ENCODE measurements at regions of chr1 and their contacts with region 1.

Region 1: DNA sequence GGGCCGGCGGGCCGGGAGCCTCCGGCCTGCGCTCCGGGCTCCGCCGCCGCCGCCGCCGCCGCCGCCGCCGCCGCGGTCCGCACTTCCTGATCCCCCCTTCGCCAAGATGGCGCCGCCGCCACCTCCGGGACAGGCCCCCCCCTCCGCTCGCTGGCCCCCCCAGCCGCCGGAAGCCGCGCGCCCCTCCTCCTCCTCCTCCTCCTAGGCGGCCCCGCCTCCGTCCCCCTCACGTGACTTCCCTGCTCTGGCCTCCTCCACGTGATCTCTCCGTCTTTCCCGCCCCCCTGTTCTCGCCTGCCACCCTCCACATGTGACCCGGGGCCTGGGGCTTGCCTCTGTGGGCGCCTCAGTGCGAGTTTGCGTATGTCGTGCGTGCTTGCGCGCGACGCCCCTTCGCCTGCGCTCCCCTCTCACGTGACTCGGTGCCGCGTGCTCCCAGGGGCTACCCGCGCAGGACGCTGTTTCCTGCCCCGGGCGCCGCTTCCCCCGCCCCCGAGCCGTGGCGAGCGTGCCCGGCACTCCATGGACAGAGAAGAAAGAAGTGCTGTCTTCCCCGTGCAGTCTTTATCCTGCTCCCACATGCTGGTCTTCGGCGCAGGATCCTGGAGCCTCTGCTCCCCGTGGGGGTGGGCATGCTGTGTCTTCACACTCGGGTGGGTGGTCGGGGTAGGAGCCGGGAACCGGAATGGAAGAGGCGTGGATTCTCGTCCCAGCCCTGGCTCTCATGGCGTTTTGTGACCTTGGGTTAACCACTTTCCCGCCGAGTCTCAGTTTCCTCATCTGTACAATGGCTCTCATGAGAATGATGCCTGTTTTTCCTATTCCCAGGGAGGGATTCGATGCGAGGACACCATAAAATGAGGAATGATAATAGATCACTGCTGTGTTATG is at the start of gene UBE2Q1:
- DNase-seq: peak; percentile 100
- ATAC-seq: peak; percentile 95
- H3K4me3 Mint-ChIP-seq: peak within 1 kb of the TSS; percentile 90
- H3K27ac Mint-ChIP-seq: peak within 1 kb of the TSS; percentile 93
- H3K4me1 Mint-ChIP-seq: peaks cover 37% of the 10 kb centered on the region
- H3K27me3 Mint-ChIP-seq: no peaks in the 10 kb centered on the region
- total RNA-seq, gene UBE2Q1: 93.6 to 103 TPM

Region 2: DNA sequence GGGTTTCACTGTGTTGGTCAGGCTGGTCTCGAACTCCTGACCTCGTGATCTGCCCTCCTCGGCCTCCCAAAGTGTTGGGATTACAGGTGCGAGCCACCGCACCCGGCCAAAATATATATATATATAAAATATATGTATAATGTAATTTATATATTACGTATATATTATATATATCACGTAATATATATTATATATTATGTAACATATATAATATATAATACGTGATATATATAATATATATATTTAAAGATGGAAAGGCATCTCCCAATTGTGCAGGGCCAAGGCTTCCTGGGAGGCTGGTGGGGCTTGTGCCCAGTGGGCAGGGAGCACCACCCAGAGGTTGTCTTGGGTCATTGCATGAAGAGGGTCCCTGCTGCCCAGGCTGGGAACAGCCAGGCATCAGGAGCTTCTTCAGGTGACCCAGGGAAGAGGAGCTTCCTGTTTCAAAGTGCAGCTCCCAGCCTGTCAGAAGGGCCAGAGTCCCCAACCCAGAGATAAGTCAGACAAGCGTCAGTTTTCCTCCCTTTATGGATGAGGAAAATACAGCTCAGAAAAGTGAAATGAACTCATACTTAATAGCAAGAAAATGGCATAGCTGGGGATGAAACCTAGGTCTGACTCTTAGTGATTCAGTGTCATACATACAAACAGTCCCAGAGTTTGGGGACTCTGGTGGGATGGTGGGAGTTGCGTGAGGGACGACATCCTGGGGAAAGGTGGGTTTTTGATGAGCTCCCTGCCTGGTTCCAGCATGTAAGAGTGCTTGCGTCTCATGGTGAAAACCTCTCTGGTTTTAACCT is 12.4 kb before region 1 on chr1:
- CTCF ChIA-PET with region 1: interaction called, 21 read pairs
- POLR2A ChIA-PET with region 1: no interaction called
- DNase-seq: peak; percentile 65
- ATAC-seq: peak; percentile 80
- H3K4me3 Mint-ChIP-seq: no peak overlapping the region
- H3K27ac Mint-ChIP-seq: no peak overlapping the region
- H3K4me1 Mint-ChIP-seq: peaks cover 8% of the 10 kb centered on the region
- H3K27me3 Mint-ChIP-seq: no peaks in the 10 kb centered on the region

Region 3: DNA sequence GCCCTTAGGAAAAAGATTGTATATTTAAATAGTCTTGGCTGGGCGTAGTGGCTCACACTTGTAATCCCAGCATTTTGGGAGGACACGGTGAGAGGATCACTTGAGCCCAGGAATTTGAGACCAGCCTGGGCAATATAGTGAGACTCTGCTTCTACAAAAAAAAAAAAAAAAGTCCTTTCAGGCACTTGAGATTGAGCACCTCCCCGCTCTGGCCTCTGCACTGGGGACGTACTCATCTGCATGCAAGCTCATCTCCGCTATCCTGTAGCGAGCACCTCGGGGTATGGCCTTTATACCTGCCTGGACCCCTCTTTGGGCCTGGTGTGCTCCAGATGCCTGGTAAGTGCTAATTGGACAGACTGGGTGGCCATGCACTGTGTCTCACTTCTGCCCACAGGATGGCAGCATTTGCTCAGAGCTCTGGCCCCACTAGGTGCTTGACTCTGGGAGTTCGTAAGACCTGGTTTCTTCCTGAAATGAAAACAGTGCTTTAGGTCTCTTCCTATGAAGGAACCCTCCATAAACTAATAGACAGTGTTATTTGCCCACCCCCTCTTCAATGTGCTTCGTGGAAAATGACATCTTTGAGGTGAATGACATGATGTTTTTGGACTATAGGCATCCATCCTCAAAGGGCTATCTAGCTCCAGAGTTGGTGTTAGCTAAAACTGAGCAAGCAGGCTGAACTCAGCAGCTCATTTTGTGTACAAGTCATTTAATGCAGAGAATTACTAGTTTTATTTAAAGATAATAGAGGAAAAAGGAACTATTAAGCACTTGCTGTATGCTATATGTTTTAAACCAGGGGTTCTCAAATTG is 110.9 kb after region 1 on chr1:
- CTCF ChIA-PET with region 1: interaction called, 15 read pairs
- POLR2A ChIA-PET with region 1: no interaction called
- DNase-seq: peak; percentile 82
- ATAC-seq: peak; percentile 100
- H3K4me3 Mint-ChIP-seq: no peak overlapping the region
- H3K27ac Mint-ChIP-seq: no peak overlapping the region
- H3K4me1 Mint-ChIP-seq: peaks cover 12% of the 10 kb centered on the region
- H3K27me3 Mint-ChIP-seq: peaks cover 2% of the 10 kb centered on the region

Region 4: DNA sequence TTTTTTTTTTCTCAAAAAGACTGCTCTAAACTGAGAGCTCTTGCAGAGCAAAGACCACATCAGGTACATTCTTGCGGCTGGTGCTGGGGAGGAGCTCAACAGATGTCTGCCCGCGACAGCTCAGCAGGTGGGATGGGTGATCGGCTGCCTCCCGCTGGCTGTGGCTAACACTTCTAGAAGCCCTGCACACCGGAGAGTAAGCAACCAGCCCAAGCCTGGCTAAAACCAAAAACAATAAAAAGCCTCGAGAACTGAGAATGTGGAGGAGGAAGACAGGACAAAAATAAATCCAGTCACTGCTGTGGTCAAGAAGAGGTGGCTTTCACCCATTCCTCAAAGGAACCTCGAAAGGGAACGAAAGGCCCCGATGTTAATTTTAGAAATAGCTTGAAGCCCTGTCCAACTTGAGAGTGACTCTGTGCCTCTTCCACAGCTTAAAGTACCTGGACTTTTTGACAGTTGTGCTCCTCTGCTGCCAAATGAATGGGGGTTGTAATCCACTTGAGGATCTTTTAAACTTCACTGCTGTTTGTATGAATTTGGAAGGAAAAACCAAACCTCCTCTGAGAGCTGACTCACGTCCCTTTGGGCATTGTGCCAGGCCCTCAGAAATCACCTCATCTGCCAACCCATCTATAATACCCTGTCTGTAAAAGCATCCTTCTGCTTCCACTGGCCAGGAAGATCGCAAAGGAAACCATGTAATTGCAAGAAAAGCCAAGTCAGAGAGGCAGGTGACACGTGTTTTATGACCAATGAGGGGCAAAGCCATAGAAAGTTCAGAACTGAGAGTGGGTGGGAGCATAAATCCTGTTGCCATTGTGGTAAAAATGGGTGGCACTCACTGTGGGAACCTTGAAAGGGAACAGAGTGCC is 232.7 kb after region 1 on chr1:
- CTCF ChIA-PET with region 1: interaction called, 13 read pairs
- POLR2A ChIA-PET with region 1: no interaction called
- DNase-seq: peak; percentile 93
- ATAC-seq: peak; percentile 98
- H3K4me3 Mint-ChIP-seq: peak overlapping the region; percentile 52
- H3K27ac Mint-ChIP-seq: peak overlapping the region; percentile 89
- H3K4me1 Mint-ChIP-seq: peaks cover 35% of the 10 kb centered on the region
- H3K27me3 Mint-ChIP-seq: peaks cover 17% of the 10 kb centered on the region

Region 5: GRCh38 chr1:154884869-154885701 is 326.3 kb after region 1 on chr1:
- CTCF ChIA-PET with region 1: interaction called, 24 read pairs
- POLR2A ChIA-PET with region 1: no interaction called
- DNase-seq: no peak
- ATAC-seq: no peak
- H3K4me3 Mint-ChIP-seq: no peak overlapping the region
- H3K27ac Mint-ChIP-seq: no peak overlapping the region
- H3K4me1 Mint-ChIP-seq: peaks cover 18% of the 10 kb centered on the region
- H3K27me3 Mint-ChIP-seq: peaks cover 2% of the 10 kb centered on the region

Region 6: GRCh38 chr1:155084722-155085503 is 526.1 kb after region 1 on chr1:
- CTCF ChIA-PET with region 1: interaction called, 14 read pairs
- POLR2A ChIA-PET with region 1: no interaction called
- DNase-seq: peak; percentile 96
- ATAC-seq: peak; percentile 86
- H3K4me3 Mint-ChIP-seq: peak overlapping the region; percentile 91
- H3K27ac Mint-ChIP-seq: peak overlapping the region; percentile 95
- H3K4me1 Mint-ChIP-seq: peaks cover 41% of the 10 kb centered on the region
- H3K27me3 Mint-ChIP-seq: peaks cover 28% of the 10 kb centered on the region